HepG2 (cell line): ENCODE measurements at regions of chr21 and their contacts with region 1.

Region 1: DNA sequence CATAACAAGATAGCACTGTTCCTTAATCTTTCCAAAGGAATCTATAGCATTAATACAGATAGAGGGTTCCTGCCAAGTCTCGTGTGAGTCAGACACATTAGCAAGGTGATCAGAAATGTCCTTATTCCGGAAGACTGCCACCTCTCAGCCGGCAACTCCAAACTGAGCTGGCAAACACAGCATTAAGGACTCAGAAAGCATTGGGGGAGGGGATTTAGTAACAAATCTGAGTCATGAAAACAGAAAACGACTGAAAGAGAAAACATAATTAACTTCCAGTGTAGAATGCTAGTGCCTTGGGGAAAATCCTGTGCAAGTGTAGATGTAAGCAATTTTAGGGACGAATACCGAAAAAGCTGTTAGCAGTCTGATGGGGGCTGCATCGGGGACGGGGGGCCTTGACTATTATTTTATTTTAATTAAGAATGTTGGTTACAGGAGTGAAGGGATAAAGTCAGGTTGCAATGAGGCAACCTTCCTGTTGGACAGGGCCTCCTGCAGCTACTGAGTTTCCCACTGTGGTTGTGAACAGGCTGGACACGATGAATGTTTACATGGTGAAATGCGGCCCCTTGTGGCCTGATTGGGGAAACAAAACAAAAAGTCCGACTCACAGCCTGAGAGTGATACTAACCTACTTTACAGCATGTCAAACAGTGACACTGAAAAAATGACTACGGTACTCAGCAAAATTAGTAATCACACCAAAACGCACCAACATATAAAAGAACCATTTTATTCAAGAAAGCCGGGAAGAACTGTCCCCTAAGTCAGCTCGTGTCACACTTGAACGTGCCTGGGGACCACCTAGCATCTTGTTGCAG is 20.7 kb downstream of the MIS18A start:
- DNase-seq: peak; percentile 73
- ATAC-seq: peak; percentile 97
- H3K4me3 ChIP-seq: no peak overlapping the region
- H3K27ac ChIP-seq: no peak overlapping the region
- H3K4me1 ChIP-seq: no peaks in the 10 kb centered on the region
- H3K27me3 ChIP-seq: peaks cover 0 to 19% of the 10 kb centered on the region in 2 experiments; a peak in 4 of 5 replicates
- CTCF ChIP-seq: peak; percentile 89
- EP300 ChIP-seq: no peak
- POLR2A ChIP-seq: no peak
- RAD21 ChIP-seq: peak; percentile 80

Region 2: GRCh38 chr21:31725202-31725839 is 532.9 kb before region 1 on chr21:
- CTCF ChIA-PET with region 1: no interaction called
- POLR2A ChIA-PET with region 1: no interaction called
- in situ Hi-C with region 1: no loop called
- intact Hi-C with region 1: no loop called
- DNase-seq: no peak
- ATAC-seq: no peak
- H3K4me3 ChIP-seq: no peak overlapping the region
- H3K27ac ChIP-seq: no peak overlapping the region
- H3K4me1 ChIP-seq: peaks cover 78% of the 10 kb centered on the region
- H3K27me3 ChIP-seq: no peaks in the 10 kb centered on the region
- CTCF ChIP-seq: no peak
- EP300 ChIP-seq: no peak
- POLR2A ChIP-seq: no peak
- RAD21 ChIP-seq: no peak

Region 3: GRCh38 chr21:31772674-31773555 is 485.3 kb before region 1 on chr21:
- CTCF ChIA-PET with region 1: no interaction called
- POLR2A ChIA-PET with region 1: no interaction called
- in situ Hi-C with region 1: loop called (anchors 10 kb)
- intact Hi-C with region 1: no loop called
- DNase-seq: no peak
- ATAC-seq: no peak
- H3K4me3 ChIP-seq: no peak overlapping the region
- H3K27ac ChIP-seq: no peak overlapping the region
- H3K4me1 ChIP-seq: no peaks in the 10 kb centered on the region
- H3K27me3 ChIP-seq: no peaks in the 10 kb centered on the region; a peak in 1 of 5 replicates
- CTCF ChIP-seq: no peak
- EP300 ChIP-seq: no peak
- POLR2A ChIP-seq: no peak
- RAD21 ChIP-seq: no peak

Region 4: GRCh38 chr21:31781737-31782136 is 476.4 kb before region 1 on chr21:
- CTCF ChIA-PET with region 1: interaction called, 19 read pairs
- POLR2A ChIA-PET with region 1: no interaction called
- in situ Hi-C with region 1: loop called (anchors 10 kb)
- intact Hi-C with region 1: loop called (anchors 1 kb)
- DNase-seq: no peak
- ATAC-seq: no peak
- H3K4me3 ChIP-seq: no peak overlapping the region
- H3K27ac ChIP-seq: no peak overlapping the region
- H3K4me1 ChIP-seq: no peaks in the 10 kb centered on the region
- H3K27me3 ChIP-seq: peaks cover 0 to 6% of the 10 kb centered on the region in 2 experiments; a peak in 1 of 5 replicates
- CTCF ChIP-seq: no peak
- EP300 ChIP-seq: no peak
- POLR2A ChIP-seq: no peak
- RAD21 ChIP-seq: no peak

Region 5: DNA sequence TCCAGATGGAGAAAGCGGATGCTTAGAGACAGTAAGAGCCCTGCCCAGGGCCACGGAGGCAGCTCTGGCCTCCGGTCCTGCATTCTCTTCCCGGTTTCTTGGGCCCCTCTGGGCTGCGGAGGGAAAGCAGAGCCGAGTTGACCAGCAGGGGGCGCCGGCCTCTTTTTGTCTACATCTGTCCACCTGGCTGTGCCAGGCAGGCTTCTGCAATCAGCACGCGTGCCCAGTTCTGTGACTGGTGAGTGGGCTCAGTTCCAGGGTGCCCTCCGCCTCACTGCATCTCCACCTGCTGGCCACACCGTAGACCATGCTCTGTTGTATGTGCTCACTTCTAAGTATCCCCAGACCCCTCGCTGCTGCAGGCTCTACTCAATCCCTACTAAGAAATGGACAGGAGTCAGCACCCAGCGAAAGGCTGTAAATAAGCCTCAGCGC is 392.1 kb before region 1 on chr21:
- CTCF ChIA-PET with region 1: interaction called, 35 read pairs
- POLR2A ChIA-PET with region 1: interaction called, 3 read pairs
- in situ Hi-C with region 1: loop called (anchors 5 kb)
- intact Hi-C with region 1: loop called (anchors 1 kb)
- DNase-seq: peak; percentile 65
- ATAC-seq: peak; percentile 98
- H3K4me3 ChIP-seq: no peak overlapping the region
- H3K27ac ChIP-seq: no peak overlapping the region
- H3K4me1 ChIP-seq: no peaks in the 10 kb centered on the region; the same call in 1 of the 2 replicates
- H3K27me3 ChIP-seq: peaks cover 0 to 18% of the 10 kb centered on the region in 2 experiments; a peak in 3 of 5 replicates
- CTCF ChIP-seq: peak; percentile 90
- EP300 ChIP-seq: no peak
- POLR2A ChIP-seq: no peak
- RAD21 ChIP-seq: peak; percentile 85

Region 6: DNA sequence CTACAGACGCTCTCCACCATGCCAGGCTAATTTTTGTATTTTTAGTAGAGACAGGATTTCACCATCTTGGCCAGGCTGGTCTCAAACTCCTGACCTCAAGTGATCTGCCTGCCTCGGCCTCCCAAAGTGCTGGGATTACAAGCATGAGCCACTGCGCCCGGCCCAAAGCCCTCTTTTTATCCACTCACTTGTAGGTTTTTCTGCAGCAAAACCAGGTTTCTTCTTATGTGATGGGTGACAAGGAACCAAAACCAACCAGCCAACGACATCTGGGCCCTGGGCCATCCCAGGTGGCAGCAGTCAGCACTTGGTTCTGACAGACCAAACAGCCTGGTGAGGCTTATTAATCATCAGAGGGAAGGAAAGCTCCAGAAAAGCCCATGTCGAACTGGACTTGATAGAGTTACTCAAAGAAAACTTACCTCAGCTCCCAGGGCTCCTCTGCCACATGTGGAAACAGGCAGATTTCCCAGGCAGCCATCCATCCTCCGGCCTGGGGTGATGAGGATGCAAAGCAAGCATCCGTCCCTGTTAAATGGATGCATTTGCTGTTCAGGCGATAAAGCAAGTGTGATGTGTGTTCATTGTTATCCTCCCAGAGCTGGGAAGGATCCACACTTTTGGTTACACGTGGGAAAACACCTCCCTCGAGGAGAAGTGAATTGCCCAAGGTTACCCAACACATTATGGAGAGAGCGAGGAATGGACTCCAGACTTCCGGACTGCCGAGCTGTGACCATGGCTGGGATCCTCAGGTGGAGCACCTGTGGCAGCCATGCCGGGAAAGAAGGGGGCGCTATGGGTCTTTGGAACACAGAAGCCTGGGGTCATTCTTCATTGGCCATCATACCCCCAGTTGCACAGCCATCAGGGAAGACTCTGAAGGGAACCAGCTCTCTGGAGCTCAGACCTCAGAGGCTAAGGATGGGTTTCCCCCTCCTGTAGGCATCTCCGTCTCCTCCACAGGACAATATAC is 266.5 kb before region 1 on chr21:
- CTCF ChIA-PET with region 1: no interaction called
- POLR2A ChIA-PET with region 1: no interaction called
- in situ Hi-C with region 1: loop called (anchors 25 kb)
- intact Hi-C with region 1: no loop called
- DNase-seq: no peak
- ATAC-seq: no peak
- H3K4me3 ChIP-seq: no peak overlapping the region
- H3K27ac ChIP-seq: no peak overlapping the region
- H3K4me1 ChIP-seq: peaks cover 11% of the 10 kb centered on the region
- H3K27me3 ChIP-seq: no peaks in the 10 kb centered on the region
- CTCF ChIP-seq: peak; percentile 30; the same call in 1 of the 2 replicates
- EP300 ChIP-seq: no peak
- POLR2A ChIP-seq: no peak
- RAD21 ChIP-seq: no peak

Region 7: GRCh38 chr21:32757804-32758203 is 499.6 kb after region 1 on chr21:
- CTCF ChIA-PET with region 1: no interaction called
- POLR2A ChIA-PET with region 1: no interaction called
- in situ Hi-C with region 1: no loop called
- intact Hi-C with region 1: no loop called
- DNase-seq: no peak
- ATAC-seq: no peak
- H3K4me3 ChIP-seq: no peak overlapping the region
- H3K27ac ChIP-seq: no peak overlapping the region
- H3K4me1 ChIP-seq: no peaks in the 10 kb centered on the region
- H3K27me3 ChIP-seq: no peaks in the 10 kb centered on the region
- CTCF ChIP-seq: no peak
- EP300 ChIP-seq: no peak
- POLR2A ChIP-seq: no peak
- RAD21 ChIP-seq: no peak